Left ventricle myocardium inferior (tissue), 1 donor: ENCODE measurements at regions of chr1 and their contacts with region 1.

Region 1: GRCh38 chr1:91511386-91511785 is 10.7 kb downstream of the CDC7 start:
- DNase-seq: no peak
- H3K4me3 ChIP-seq: no peak overlapping the region
- H3K27ac ChIP-seq: no peak overlapping the region
- H3K4me1 ChIP-seq: no peaks in the 10 kb centered on the region
- H3K27me3 ChIP-seq: no peaks in the 10 kb centered on the region
- CTCF ChIP-seq: peak; percentile 75

Region 2: DNA sequence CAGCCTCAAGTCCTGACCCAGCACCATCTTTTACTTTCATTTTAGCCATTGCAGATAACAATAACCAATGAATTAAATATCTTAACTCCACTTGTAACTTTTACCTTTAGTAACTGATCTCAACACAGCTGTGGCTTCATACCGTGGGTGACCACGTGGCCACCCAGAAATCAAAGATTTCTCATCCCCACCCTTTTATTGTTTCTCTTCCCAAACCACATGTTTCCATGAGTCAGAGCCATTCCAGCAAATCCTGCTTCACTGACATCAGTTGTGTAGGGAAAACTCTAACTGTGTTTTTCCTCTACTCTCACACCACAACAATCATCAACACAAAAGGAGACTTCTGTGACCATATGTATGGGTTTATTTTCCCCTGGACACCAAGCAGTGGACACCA is 412.8 kb after region 1 on chr1:
- intact Hi-C with region 1: loop called (anchors 1 kb)
- DNase-seq: no peak
- H3K4me3 ChIP-seq: no peak overlapping the region
- H3K27ac ChIP-seq: no peak overlapping the region
- H3K4me1 ChIP-seq: no peaks in the 10 kb centered on the region
- H3K27me3 ChIP-seq: no peaks in the 10 kb centered on the region
- CTCF ChIP-seq: no peak